ENCODE measurements at regions of chr3 and their contacts with region 1.

Region 1: GRCh38 chr3:175149675-175150074 is 290.5 kb downstream of the NAALADL2 start:
- DNase-seq: peak; percentile 76
- ATAC-seq: no peak
- H3K4me3 ChIP-seq: no peak overlapping the region
- H3K27ac ChIP-seq: peak overlapping the region; percentile 84
- H3K4me1 ChIP-seq: peaks cover 26% of the 10 kb centered on the region
- H3K27me3 ChIP-seq: no peaks in the 10 kb centered on the region
- CTCF ChIP-seq: no peak

Region 2: GRCh38 chr3:174125267-174125824 is 1024.3 kb before region 1 on chr3:
- CTCF ChIA-PET with region 1: no interaction called
- POLR2A ChIA-PET with region 1: no interaction called
- intact Hi-C with region 1: loop called (anchors 5 kb)
- DNase-seq: peak; percentile 71
- ATAC-seq: peak; percentile 82
- H3K4me3 ChIP-seq: no peak overlapping the region
- H3K27ac ChIP-seq: no peak overlapping the region
- H3K4me1 ChIP-seq: peaks cover 18% of the 10 kb centered on the region
- H3K27me3 ChIP-seq: no peaks in the 10 kb centered on the region
- CTCF ChIP-seq: peak; percentile 94

Region 3: GRCh38 chr3:174614036-174614435 is 535.6 kb before region 1 on chr3:
- CTCF ChIA-PET with region 1: no interaction called
- POLR2A ChIA-PET with region 1: no interaction called
- intact Hi-C with region 1: loop called (anchors 10 kb)
- DNase-seq: no peak
- ATAC-seq: no peak
- H3K4me3 ChIP-seq: no peak overlapping the region
- H3K27ac ChIP-seq: no peak overlapping the region
- H3K4me1 ChIP-seq: no peaks in the 10 kb centered on the region
- H3K27me3 ChIP-seq: no peaks in the 10 kb centered on the region
- CTCF ChIP-seq: no peak

Region 4: DNA sequence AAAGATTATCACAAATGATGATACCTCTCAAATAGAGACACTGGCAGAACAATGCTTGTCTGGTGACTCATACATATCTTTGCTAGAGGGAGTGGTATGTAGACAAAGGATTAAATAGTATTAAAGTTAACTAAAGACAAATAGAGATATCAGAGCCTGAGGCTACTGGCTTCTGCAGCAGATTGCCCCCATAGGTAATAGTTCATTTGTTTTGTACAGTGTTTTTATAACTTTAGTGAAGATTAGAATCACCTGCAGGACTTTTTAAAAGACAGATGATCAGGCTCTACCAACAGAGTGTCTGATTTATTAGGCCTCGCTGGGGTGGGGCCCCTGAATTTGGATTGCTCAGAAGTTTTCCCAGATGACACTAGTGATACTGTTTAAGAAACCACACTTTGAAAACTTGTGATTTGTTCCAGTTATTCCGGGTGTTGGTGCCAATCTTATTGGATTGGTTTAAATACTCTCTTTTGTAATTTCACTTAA is 194.1 kb before region 1 on chr3:
- CTCF ChIA-PET with region 1: no interaction called
- POLR2A ChIA-PET with region 1: no interaction called
- intact Hi-C with region 1: loop called (anchors 2 kb)
- DNase-seq: peak; percentile 90
- ATAC-seq: peak; percentile 84
- H3K4me3 ChIP-seq: 0 out of 2 replicates have a peak overlapping the region, but pooled peaks have one; percentile 2
- H3K27ac ChIP-seq: peak overlapping the region; percentile 81
- H3K4me1 ChIP-seq: peaks cover 61% of the 10 kb centered on the region
- H3K27me3 ChIP-seq: no peaks in the 10 kb centered on the region
- CTCF ChIP-seq: no peak

Region 5: GRCh38 chr3:175193815-175194518 is 44.3 kb after region 1 on chr3:
- CTCF ChIA-PET with region 1: no interaction called
- POLR2A ChIA-PET with region 1: no interaction called
- intact Hi-C with region 1: loop called (anchors 5 kb)
- DNase-seq: peak; percentile 84
- ATAC-seq: peak; percentile 75
- H3K4me3 ChIP-seq: no peak overlapping the region
- H3K27ac ChIP-seq: peak overlapping the region; percentile 89
- H3K4me1 ChIP-seq: peaks cover 34% of the 10 kb centered on the region
- H3K27me3 ChIP-seq: no peaks in the 10 kb centered on the region
- CTCF ChIP-seq: no peak

Region 6: DNA sequence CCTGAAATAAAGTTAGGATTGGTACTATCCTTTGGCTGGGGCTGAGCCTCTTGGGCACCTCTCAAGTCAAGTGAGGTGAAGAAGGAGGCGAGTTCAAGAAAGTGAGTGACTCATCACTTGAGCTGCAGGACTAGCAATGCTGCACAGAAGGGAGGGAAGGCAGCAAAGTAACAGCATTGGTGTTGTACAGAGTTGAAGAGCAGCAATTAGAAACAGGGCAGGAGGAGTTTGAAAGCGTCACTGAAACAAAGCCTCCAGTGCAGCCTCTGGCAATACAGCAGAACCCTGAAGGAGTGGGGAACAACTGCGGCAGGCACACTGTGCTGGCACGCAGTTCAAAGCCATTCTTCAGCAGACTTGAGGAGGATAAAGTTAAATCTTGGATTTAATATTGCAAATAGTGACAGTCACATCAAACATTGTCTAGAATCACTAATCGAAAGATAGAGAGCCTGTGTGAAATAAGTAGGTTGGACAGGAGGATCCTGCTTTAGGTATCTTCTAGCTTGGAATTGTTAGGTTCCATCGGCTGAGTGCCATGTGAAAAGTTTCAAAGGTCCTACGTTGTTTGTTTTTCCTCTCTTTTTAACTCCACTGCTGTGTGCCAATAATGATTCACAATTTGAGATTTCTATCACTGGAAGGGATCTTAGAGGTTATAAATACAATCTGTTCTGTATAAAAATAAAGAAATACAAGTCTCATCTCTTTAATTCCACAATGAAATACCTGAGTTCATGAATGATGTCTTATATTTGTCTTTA is 189.3 kb after region 1 on chr3:
- CTCF ChIA-PET with region 1: no interaction called
- POLR2A ChIA-PET with region 1: no interaction called
- intact Hi-C with region 1: loop called (anchors 2 kb)
- DNase-seq: peak; percentile 74
- ATAC-seq: peak; percentile 87
- H3K4me3 ChIP-seq: peak overlapping the region; percentile 47; the same call in 1 of the 2 replicates
- H3K27ac ChIP-seq: peak overlapping the region; percentile 74
- H3K4me1 ChIP-seq: peaks cover 24% of the 10 kb centered on the region
- H3K27me3 ChIP-seq: no peaks in the 10 kb centered on the region
- CTCF ChIP-seq: no peak

Region 7: DNA sequence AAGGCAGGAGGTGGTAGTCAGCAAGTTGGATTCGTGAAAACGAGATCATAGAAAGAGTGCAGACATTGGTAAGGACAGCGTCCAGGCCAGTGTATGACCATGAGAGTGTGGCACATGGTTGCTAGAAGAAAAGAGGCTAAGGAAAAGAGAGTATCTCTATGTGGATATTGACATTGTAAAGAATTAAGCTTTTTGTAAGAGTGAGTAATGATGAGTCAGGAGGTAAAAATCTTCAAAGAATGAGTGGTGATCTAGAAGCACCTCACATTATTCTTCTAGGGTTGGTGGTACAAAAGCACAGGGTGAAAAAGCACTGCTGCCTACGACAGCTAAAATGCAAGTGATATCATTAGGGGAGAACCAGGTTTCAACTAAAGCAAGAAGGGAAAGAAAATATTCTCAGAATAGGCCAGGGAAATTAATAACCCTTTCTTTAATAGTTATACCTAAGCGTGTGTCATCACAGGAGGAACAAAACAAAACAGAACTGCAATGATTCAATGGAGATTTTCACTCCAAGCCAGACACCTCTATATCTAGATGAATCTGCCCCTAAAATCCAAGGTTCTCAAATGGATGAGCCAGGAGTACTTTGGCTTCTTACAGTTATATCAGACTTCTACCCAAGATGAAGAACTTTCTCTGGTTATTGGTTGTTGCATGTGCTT is 594.2 kb after region 1 on chr3:
- CTCF ChIA-PET with region 1: no interaction called
- POLR2A ChIA-PET with region 1: no interaction called
- intact Hi-C with region 1: loop called (anchors 10 kb)
- DNase-seq: peak; percentile 92
- ATAC-seq: peak; percentile 93
- H3K4me3 ChIP-seq: no peak overlapping the region
- H3K27ac ChIP-seq: peak overlapping the region; percentile 68
- H3K4me1 ChIP-seq: peaks cover 55% of the 10 kb centered on the region
- H3K27me3 ChIP-seq: no peaks in the 10 kb centered on the region
- CTCF ChIP-seq: no peak